ENCODE measurements at regions of chr19 and their contacts with region 1.

Region 1: DNA sequence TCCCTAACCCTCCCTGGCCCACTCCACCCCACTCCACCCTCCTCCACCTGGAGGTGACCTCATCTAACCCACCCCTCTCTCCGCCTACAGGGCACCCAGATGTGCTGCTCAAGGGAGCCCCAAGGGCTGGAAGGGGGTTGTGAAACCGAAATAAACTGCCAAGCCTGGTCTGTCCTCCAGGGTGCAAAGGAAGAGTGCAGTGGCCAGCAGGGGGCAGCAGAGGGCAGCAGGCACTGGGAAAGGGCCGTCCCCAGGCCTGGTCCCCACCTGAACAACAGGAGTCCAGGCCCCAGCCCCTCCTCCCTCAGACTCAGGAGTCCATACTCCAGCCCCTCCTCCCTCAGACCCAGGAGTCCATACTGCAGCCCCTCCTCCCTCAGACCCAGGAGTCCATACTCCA is 8.4 kb upstream of the BCAM start:
- DNase-seq: peak; percentile 88
- H3K4me3 ChIP-seq: no peak overlapping the region
- H3K27ac ChIP-seq: no peak overlapping the region
- H3K4me1 ChIP-seq: peaks cover 0 to 10% (median 0%) of the 10 kb centered on the region in 4 donors
- H3K27me3 ChIP-seq: no peaks in the 10 kb centered on the region
- CTCF ChIP-seq: peak; percentile 88 to 97 (median 94)
- EP300 ChIP-seq: no peak
- POLR2A ChIP-seq: no peak

Region 2: DNA sequence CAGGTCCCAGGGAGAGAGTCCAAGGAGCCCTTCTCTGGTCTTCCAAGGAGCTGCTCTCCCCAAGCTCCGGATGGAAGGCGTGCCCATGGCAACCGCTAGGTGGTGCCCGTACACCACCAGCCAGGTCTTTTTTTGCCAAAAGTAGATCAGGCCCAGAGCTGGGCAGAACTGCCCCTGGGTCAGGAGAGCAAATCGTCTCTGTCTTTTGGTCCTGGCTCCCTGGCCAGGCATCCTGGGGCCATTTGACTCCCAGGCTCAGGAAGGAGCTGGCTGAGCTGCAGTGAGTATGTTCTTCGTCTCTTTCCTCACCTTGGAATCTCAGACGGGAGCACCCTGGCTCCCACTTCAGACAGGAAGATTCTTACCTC is 76.5 kb before region 1 on chr19:
- in situ Hi-C with region 1: no loop called
- intact Hi-C with region 1: no loop called
- DNase-seq: peak; percentile 90
- H3K4me3 ChIP-seq: peak overlapping the region in 2 of 4 donors; percentile 10 to 25
- H3K27ac ChIP-seq: peak overlapping the region; percentile 81 to 90 (median 82)
- H3K4me1 ChIP-seq: peaks cover 8 to 70% (median 40%) of the 10 kb centered on the region in 4 donors
- H3K27me3 ChIP-seq: no peaks in the 10 kb centered on the region
- CTCF ChIP-seq: peak; percentile 96 to 99 (median 97)
- EP300 ChIP-seq: no peak
- POLR2A ChIP-seq: peak; percentile 30

Region 3: GRCh38 chr19:44740351-44740824 is 60.1 kb before region 1 on chr19:
- in situ Hi-C with region 1: no loop called
- intact Hi-C with region 1: no loop called
- DNase-seq: no peak
- H3K4me3 ChIP-seq: no peak overlapping the region
- H3K27ac ChIP-seq: peak overlapping the region; percentile 96 to 99 (median 97)
- H3K4me1 ChIP-seq: peaks cover 45 to 74% (median 63%) of the 10 kb centered on the region in 4 donors
- H3K27me3 ChIP-seq: no peaks in the 10 kb centered on the region
- CTCF ChIP-seq: no peak
- EP300 ChIP-seq: no peak
- POLR2A ChIP-seq: no peak

Region 4: DNA sequence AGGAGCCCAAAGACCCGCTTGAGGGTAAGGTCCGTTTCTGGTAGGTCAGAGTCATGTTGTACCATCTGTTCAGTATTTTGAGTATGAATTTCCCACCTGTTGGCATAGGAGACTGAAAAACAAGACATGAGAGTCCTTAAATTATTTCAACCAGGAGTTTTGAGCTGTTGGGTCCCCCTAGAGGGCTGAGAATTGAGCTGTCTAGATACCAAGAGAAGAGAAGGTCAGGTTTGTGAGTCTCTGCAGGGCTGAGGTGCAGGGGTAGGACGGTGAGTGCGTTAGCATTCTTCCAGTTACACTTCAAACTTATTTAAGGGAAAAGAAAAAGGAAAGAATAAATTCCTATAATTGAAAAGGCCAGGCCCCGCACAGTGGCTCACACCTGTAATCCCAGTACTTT is 17.7 kb before region 1 on chr19:
- in situ Hi-C with region 1: no loop called
- intact Hi-C with region 1: no loop called
- DNase-seq: no peak
- H3K4me3 ChIP-seq: no peak overlapping the region
- H3K27ac ChIP-seq: no peak overlapping the region
- H3K4me1 ChIP-seq: peaks cover 0 to 45% (median 8%) of the 10 kb centered on the region in 4 donors
- H3K27me3 ChIP-seq: peaks cover 4% of the 10 kb centered on the region
- CTCF ChIP-seq: no peak
- EP300 ChIP-seq: no peak
- POLR2A ChIP-seq: no peak

Region 5: GRCh38 chr19:44813070-44813840 is 12.8 kb after region 1 on chr19:
- in situ Hi-C with region 1: no loop called
- intact Hi-C with region 1: no loop called
- DNase-seq: no peak
- H3K4me3 ChIP-seq: no peak overlapping the region
- H3K27ac ChIP-seq: no peak overlapping the region
- H3K4me1 ChIP-seq: peaks cover 11 to 23% (median 17%) of the 10 kb centered on the region in 4 donors
- H3K27me3 ChIP-seq: peaks cover 3% of the 10 kb centered on the region
- CTCF ChIP-seq: no peak
- EP300 ChIP-seq: no peak
- POLR2A ChIP-seq: no peak

Region 6: GRCh38 chr19:44845612-44846454 is 45.4 kb after region 1 on chr19 and contains the start of gene NECTIN2:
- in situ Hi-C with region 1: loop called in 2 of 4 experiments (anchors 5 kb)
- intact Hi-C with region 1: loop called (anchors 1 kb)
- DNase-seq: peak; percentile 100
- H3K4me3 ChIP-seq: peak within 1 kb of the TSS; percentile 95 to 98 (median 96)
- H3K27ac ChIP-seq: peak within 1 kb of the TSS; percentile 96 to 99 (median 97)
- H3K4me1 ChIP-seq: peaks cover 11 to 42% (median 31%) of the 10 kb centered on the region in 4 donors
- H3K27me3 ChIP-seq: no peaks in the 10 kb centered on the region
- CTCF ChIP-seq: peak; percentile 66 to 97 (median 69)
- EP300 ChIP-seq: no peak
- POLR2A ChIP-seq: peak; percentile 90
- total RNA-seq, gene NECTIN2: 93.7 to 147 (median 125) TPM